ENCODE measurements at regions of chr2 and their contacts with region 1.

Region 1: DNA sequence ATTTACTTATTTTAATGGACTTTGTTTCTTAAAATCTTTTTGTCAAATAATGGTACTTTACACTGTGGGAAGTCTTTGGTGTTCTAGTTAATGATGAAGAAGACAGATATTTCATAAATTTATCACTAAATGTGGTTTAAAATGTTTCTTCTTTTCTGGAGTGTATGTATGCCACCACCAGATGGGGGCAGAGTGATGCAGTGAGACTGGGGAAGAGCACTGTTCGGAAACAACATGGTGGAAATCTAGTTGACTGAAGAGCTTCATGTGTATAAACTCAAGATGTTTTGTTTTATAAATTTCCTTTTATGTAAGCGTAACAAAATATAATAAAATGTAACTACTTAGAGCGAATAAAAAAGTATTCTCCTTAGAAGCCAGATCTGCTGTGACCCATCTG is 195.1 kb downstream of the KCNE4 start:
- DNase-seq: peak; percentile 33
- H3K4me3 ChIP-seq: no peak overlapping the region
- H3K27ac ChIP-seq: no peak overlapping the region
- H3K27me3 ChIP-seq: no peaks in the 10 kb centered on the region
- CTCF ChIP-seq: peak; percentile 80

Region 2: DNA sequence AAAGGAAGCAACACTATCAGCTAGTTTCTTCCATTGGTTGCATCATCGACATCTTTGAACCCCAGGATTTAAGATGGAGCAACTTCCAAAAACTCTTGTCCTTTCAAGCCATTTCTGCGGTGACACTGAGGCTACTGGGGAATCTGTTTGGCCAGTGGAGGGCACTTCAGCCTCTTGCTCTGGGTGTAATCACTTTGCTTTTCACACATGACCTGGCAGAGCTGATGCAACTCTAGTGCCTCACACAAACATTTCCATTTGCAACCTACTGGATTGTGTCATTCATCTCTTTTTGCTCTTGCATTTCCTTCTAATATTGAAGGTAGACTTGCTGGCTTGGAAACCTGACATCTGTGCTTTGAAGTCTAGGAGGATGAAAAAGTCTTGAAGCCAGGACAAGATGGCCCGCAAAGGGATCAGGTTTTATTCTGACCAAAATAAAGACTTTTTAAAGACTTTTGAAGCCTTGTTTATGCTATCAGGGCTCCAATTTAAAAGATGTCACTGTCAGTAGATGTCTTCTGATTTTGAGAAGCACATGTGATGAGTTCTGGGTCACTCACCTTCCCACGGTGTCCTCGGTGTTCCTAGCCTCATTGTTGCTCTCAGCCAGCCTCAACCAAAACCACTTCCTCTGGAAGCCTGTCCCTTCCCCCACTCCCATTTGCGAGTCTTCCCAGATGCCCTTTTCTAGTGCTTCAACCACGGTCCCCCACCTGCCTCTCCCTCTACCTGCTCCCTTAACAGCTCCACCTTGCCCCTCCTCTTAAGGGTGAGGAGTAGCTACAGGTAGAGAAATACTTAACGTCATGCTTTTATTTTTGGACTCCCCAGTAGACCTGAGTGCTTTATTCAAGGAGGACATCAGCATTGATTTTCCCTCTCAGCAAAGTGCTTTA is 264.9 kb before region 1 on chr2:
- in situ Hi-C with region 1: loop called (anchors 25 kb)
- DNase-seq: peak; percentile 83
- H3K4me3 ChIP-seq: no peak overlapping the region
- H3K27ac ChIP-seq: peak overlapping the region; percentile 8
- H3K27me3 ChIP-seq: no peaks in the 10 kb centered on the region
- CTCF ChIP-seq: peak; percentile 88

Measured in brain microvascular endothelial cell (primary cell).